Stomach (tissue), 19 donors: ENCODE measurements at regions of chr15 and their contacts with region 1.

Region 1: GRCh38 chr15:26670116-26670515 is 102.8 kb downstream of the GABRB3 start:
- DNase-seq: no peak
- H3K4me3 ChIP-seq: peak overlapping the region in 1 of 4 donors; percentile 10
- H3K27ac ChIP-seq: no peak overlapping the region
- H3K4me1 ChIP-seq: peaks cover 0 to 11% (median 0%) of the 10 kb centered on the region in 4 donors
- H3K27me3 ChIP-seq: peaks cover 0 to 6% (median 0%) of the 10 kb centered on the region in 3 donors
- CTCF ChIP-seq: no peak
- EP300 ChIP-seq: no peak
- POLR2A ChIP-seq: no peak

Region 2: DNA sequence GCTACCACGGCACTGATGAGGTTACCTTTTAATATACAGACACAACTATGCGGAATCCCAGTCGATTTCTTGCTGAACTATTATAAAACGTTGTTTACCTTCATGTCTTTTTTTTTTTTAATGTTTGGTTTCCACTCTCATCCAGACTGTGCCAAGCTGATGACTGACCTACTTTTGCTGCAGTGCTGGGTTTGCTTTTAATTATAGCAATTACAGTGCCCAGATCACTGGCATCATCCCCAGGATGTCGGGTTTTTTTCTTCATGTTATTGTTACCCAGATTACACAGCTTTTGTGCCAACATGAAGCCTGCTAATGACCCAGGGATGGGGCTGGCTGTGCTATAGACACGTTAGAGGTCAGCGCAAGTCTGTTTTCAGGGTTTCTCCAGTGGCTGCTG is 513.0 kb before region 1 on chr15:
- intact Hi-C with region 1: no loop called
- DNase-seq: peak in 1 of 2 donors; percentile 35
- H3K4me3 ChIP-seq: no peak overlapping the region
- H3K27ac ChIP-seq: peak overlapping the region in 1 of 5 donors; percentile 38
- H3K4me1 ChIP-seq: peaks cover 0 to 12% (median 0%) of the 10 kb centered on the region in 4 donors
- H3K27me3 ChIP-seq: peaks cover 0 to 14% (median 0%) of the 10 kb centered on the region in 3 donors
- CTCF ChIP-seq: no peak
- EP300 ChIP-seq: no peak
- POLR2A ChIP-seq: no peak

Region 3: DNA sequence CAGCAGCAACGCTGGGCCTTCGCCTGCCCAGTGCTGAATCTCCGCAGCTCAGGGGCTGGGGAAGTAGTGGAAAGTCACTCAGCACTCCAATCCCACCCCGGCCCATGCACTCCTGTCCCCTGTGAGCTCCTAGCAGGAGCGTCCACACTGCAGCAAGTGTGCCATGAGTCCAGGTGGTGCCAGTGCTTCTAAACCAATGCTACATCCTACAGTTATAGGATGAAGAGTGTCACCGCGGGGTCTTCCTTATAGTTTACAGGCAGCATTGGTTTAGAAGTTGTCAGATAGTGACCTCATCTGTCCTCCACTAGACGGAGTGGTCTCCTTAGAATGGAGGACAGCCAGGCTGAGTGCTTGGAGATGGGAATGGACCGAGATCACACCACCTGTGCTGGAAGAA is 118.6 kb before region 1 on chr15:
- intact Hi-C with region 1: no loop called
- DNase-seq: no peak
- H3K4me3 ChIP-seq: no peak overlapping the region
- H3K27ac ChIP-seq: no peak overlapping the region
- H3K4me1 ChIP-seq: no peaks in the 10 kb centered on the region
- H3K27me3 ChIP-seq: no peaks in the 10 kb centered on the region
- CTCF ChIP-seq: no peak
- EP300 ChIP-seq: no peak
- POLR2A ChIP-seq: no peak

Region 4: DNA sequence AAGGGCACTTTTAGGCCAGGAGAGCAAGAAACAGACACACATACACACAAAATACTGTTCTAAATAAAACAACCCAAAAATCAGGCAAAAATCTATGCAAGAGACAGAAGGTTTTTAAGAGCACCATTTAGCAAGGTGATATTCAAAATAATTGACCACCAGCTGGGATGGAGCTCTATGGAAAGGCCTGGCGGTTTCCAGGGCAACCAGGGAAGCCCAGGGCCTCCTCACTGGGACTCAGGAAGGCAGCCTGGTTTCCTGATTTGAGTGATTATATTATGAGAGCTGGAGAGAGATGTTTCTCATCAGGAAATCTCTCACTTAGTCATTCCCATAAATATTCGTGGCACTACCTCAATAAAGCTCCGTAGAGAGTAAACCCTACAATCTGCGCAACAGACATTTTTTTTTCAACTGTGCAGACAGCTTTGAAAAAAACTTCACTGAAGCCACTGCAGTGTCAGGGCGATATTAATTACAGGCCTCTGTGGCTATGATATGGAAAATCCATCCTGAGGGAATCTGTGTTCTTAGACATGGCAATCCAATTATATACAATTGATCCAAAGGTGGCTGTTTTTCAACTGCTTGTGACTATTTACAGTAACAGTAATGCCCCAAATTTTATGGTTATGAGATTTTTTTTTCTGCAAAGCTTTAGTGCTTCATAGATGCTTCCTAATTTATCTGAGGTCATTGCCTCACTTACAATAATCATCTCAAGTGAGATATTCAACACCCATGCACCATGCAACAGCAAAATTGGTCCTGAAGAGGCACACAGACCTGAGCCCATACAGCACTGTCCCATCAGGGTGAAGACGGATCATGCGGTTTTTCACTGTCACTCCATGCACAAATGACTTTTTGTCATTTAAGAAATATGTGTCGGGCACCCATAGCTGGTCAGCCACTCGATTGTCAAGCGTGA is 49.3 kb before region 1 on chr15:
- intact Hi-C with region 1: loop called (anchors 5 kb)
- DNase-seq: no peak
- H3K4me3 ChIP-seq: no peak overlapping the region
- H3K27ac ChIP-seq: no peak overlapping the region
- H3K4me1 ChIP-seq: no peaks in the 10 kb centered on the region
- H3K27me3 ChIP-seq: no peaks in the 10 kb centered on the region
- CTCF ChIP-seq: no peak
- EP300 ChIP-seq: no peak
- POLR2A ChIP-seq: no peak